Activated CD8-positive, alpha-beta T cell treated with anti-CD3 and anti-CD28 coated beads, Interleukin-2, amount 10 ng/mL, durations not matched to agents 7 days and 5 days (primary cell): ENCODE measurements at regions of chr9 and their contacts with region 1.

Region 1: GRCh38 chr9:130682490-130683121 is 11.0 kb upstream of the EXOSC2 start:
- DNase-seq: peak; percentile 66
- ATAC-seq: no peak
- H3K4me3 Mint-ChIP-seq: peak overlapping the region; percentile 74
- H3K27ac Mint-ChIP-seq: peak overlapping the region; percentile 66
- H3K4me1 Mint-ChIP-seq: peaks cover 6% of the 10 kb centered on the region
- H3K27me3 Mint-ChIP-seq: peaks cover 24% of the 10 kb centered on the region

Region 2: DNA sequence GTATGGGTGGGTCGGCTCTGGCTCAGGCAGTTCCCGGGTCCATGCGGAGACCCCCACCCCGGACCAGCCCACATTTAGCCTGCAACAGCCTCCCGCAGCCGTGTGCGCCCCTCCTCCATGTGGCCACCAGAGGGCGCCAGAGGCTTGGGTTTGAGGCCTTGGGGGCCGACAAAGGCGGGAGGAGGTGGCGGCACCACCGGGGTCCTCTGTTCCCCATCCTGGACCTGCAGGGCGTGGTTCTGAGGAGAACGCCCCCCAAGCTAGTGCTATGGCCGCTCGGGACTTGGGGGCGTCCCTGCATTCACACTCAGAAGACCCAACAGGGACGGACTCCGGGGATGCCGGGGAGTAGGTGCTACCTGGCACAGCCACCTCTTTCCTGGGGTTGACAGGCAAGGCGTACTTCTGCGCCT is 221.4 kb before region 1 on chr9:
- CTCF ChIA-PET with region 1: interaction called, 51 read pairs
- POLR2A ChIA-PET with region 1: no interaction called
- DNase-seq: peak; percentile 74
- ATAC-seq: peak; percentile 72
- H3K4me3 Mint-ChIP-seq: no peak overlapping the region
- H3K27ac Mint-ChIP-seq: no peak overlapping the region
- H3K4me1 Mint-ChIP-seq: no peaks in the 10 kb centered on the region
- H3K27me3 Mint-ChIP-seq: peaks cover 6% of the 10 kb centered on the region

Region 3: DNA sequence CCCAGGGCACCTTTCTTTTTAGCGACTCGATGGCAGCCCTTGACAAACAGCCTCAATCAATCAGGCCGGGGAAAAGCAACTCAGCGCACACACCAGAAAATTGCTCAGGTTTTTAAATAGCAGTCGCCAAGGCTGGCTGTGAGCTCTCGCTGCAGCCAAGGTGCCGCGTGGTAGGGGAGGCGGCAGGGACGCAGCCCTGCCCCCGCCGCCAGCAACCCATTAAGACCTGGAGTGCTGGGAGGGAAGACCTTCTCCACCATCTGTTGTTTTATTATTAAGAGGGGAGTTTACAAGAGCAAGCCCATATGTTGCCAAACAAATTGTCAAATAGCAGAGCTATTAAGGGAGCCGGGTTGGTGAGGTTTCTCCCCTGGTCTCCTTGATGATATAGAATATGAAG is 215.2 kb before region 1 on chr9:
- CTCF ChIA-PET with region 1: interaction called, 32 read pairs
- POLR2A ChIA-PET with region 1: no interaction called
- DNase-seq: no peak
- ATAC-seq: no peak
- H3K4me3 Mint-ChIP-seq: no peak overlapping the region
- H3K27ac Mint-ChIP-seq: no peak overlapping the region
- H3K4me1 Mint-ChIP-seq: no peaks in the 10 kb centered on the region
- H3K27me3 Mint-ChIP-seq: peaks cover 26% of the 10 kb centered on the region

Region 4: GRCh38 chr9:130732131-130732530 is 49.5 kb after region 1 on chr9:
- CTCF ChIA-PET with region 1: no interaction called
- POLR2A ChIA-PET with region 1: no interaction called
- DNase-seq: no peak
- ATAC-seq: no peak
- H3K4me3 Mint-ChIP-seq: no peak overlapping the region
- H3K27ac Mint-ChIP-seq: no peak overlapping the region
- H3K4me1 Mint-ChIP-seq: peaks cover 2% of the 10 kb centered on the region
- H3K27me3 Mint-ChIP-seq: no peaks in the 10 kb centered on the region